ENCODE measurements at regions of chr13 and their contacts with region 1.

Region 1: DNA sequence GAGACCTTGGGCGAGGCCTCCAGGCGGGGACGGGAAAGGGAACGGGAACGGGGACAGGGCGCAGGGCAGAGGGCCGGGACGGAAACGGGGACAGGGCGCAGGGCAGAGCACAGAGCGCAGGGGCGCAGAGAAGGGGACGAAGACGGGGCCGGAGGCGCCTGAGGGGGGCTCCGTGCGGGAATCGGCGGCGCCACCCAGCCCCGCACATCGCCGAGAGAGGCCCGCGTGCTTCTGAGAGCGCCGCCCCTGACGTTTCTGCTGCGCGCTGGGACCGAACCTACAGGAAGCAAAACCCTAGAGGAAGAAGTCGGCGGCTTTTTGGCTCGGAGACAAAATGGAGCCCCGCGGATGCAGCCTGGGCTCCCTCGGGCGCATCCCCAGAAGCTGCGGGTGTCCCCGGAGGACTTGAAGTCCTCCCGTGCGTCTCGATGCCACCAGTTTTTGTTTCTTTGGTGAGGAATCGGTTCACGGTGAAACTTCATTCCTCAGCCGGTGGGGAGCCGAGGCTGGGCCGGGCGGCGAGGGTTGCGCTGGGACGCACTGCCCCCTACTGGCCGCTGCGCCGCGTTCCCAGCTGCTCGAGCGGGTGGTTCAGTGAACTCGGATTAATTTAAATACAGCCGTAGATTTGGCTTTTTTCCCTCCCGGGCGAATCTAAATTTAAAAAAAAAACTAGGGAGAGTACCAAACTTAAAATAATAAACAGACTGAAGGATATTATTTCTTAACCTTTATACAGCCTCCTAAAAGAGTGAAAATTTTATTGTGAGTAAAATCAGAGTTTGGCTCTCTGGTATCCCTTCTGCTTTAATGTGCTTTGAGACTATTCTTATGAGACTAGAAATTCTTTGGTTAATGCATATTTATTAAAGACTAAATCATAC is 350.0 kb upstream of the ARGLU1 start:
- DNase-seq: peak; percentile 77 to 82
- ATAC-seq: peak; percentile 86 to 93 (median 90)
- H3K4me3 ChIP-seq: peak overlapping the region; percentile 45 to 76 (median 63)
- H3K27ac ChIP-seq: peak overlapping the region; percentile 84 to 98 (median 95)
- H3K4me1 ChIP-seq: peaks cover 0 to 48% (median 17%) of the 10 kb centered on the region in 9 donors
- H3K27me3 ChIP-seq: peaks cover 0 to 3% (median 0%) of the 10 kb centered on the region in 7 donors
- CTCF ChIP-seq: peak; percentile 87 to 98 (median 95)

Region 2: DNA sequence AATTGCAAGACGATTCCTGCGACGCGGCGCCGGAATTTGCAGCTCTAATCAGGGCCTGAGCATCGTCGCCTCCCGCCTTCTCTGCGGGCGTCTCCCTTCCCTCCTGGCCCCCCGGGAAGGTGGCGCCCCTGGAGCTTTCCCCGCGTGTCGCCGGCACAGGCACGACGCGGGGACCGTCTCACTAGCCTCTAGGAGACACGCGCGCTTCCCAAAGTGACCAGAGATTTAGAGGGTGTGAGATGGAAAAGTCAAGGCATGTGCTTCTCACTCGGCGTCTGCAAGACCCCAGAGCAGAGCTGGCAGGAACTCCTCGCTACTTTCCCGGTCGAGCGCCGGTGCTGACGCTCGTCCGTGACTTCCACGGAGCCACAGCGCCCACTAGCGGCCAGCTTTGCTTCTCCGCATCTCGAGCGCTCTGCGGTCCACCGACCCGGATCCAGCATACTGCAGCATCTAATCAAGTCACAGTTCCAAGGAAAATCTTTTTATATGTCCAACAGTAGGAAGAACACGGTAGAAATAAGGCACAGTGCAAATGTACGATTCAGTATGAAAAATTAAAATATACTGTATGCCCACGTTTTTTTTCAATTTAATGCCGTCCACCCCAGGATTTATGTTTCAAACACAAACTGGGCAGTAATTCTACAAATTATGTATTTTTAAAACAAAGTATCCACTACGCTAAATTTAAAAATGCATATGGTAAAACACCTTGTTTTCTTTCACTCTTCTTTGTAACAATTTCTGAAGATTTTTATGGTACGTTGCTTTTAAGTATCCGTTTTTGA is 381.5 kb before region 1 on chr13:
- intact Hi-C with region 1: loop called in 6 of 10 experiments (anchors 2 to 10 kb)
- DNase-seq: peak; percentile 92 to 94
- ATAC-seq: peak; percentile 66 to 92 (median 86)
- H3K4me3 ChIP-seq: peak overlapping the region; percentile 59 to 87 (median 73)
- H3K27ac ChIP-seq: peak overlapping the region; percentile 47 to 88 (median 82)
- H3K4me1 ChIP-seq: peaks cover 0 to 47% (median 21%) of the 10 kb centered on the region in 9 donors
- H3K27me3 ChIP-seq: peaks cover 0 to 39% (median 0%) of the 10 kb centered on the region in 7 donors
- CTCF ChIP-seq: peak; percentile 93 to 99 (median 98)

Region 3: DNA sequence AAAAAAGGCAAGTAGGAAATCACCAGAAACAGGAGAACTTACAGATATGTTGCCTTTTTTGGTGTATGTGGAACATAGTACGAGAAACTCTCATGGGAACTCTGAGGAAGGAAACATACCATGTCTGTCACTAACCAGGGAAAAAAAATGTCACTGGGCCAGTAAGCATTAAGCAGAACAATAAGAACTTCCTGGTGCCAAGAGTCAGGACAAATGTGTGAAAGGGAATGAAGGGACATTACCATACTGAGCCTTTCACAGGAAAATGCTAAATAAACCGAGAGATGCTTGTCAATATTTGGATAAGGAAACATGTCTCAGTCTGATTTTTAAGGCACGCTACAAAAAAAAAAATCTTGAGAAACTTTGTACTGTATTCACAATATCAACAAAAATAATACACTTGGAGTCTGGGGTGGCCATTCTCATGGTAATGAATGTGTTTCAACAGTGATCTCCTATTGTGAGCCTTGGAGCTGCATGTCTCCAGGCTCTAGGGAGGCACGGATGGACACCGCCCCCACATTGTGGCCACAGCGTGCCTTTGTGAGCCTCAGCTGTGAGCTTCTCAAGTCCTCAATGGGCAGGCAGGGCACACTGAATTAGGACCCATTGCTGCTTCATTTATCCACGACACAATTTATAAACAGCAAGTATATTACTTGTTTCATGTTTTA is 237.0 kb before region 1 on chr13:
- intact Hi-C with region 1: loop called in 1 of 10 experiments (anchors 5 kb)
- DNase-seq: peak; percentile 16 to 23
- ATAC-seq: peak in 6 of 8 donors; percentile 55 to 88 (median 77)
- H3K4me3 ChIP-seq: no peak overlapping the region
- H3K27ac ChIP-seq: peak overlapping the region in 8 of 10 donors; percentile 16 to 72 (median 50)
- H3K4me1 ChIP-seq: peaks cover 0 to 45% (median 16%) of the 10 kb centered on the region in 9 donors
- H3K27me3 ChIP-seq: no peaks in the 10 kb centered on the region
- CTCF ChIP-seq: no peak

Region 4: DNA sequence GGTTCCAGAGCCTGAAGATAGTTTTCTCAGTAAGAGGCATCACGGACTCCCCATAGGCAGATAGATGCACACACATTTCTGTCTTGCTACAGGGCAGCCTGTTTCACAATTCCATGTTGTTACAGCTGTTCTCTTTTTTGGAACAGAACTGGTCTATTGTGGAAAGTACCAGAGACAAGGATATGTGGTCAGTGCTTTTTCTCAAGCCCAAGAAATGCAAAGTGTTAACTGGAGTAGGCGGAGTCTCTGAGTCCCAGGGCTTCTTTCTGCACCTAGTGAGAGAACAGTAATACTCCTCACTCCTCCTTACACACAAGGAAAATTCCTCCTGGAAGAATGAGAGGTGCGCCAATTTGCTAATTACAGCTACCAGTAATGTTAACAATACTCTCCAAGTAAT is 208.4 kb before region 1 on chr13:
- intact Hi-C with region 1: loop called in 5 of 10 experiments (anchors 5 kb)
- DNase-seq: peak in 1 of 2 donors; percentile 54
- ATAC-seq: peak; percentile 70 to 92 (median 88)
- H3K4me3 ChIP-seq: peak overlapping the region in 8 of 10 donors; percentile 19 to 50 (median 40)
- H3K27ac ChIP-seq: peak overlapping the region; percentile 65 to 90 (median 82)
- H3K4me1 ChIP-seq: peaks cover 0 to 67% (median 17%) of the 10 kb centered on the region in 9 donors
- H3K27me3 ChIP-seq: no peaks in the 10 kb centered on the region
- CTCF ChIP-seq: no peak

Region 5: GRCh38 chr13:107124129-107124718 is 206.3 kb after region 1 on chr13:
- intact Hi-C with region 1: loop called in 6 of 10 experiments (anchors 5 to 10 kb)
- DNase-seq: no peak
- ATAC-seq: no peak
- H3K4me3 ChIP-seq: no peak overlapping the region
- H3K27ac ChIP-seq: no peak overlapping the region
- H3K4me1 ChIP-seq: peaks cover 0 to 6% (median 0%) of the 10 kb centered on the region in 9 donors
- H3K27me3 ChIP-seq: no peaks in the 10 kb centered on the region
- CTCF ChIP-seq: peak; percentile 54 to 88 (median 66)

Region 6: GRCh38 chr13:107258599-107259187 is 340.8 kb after region 1 on chr13:
- intact Hi-C with region 1: no loop called
- DNase-seq: no peak
- ATAC-seq: no peak
- H3K4me3 ChIP-seq: no peak overlapping the region
- H3K27ac ChIP-seq: no peak overlapping the region
- H3K4me1 ChIP-seq: no peaks in the 10 kb centered on the region
- H3K27me3 ChIP-seq: no peaks in the 10 kb centered on the region
- CTCF ChIP-seq: no peak